Breast epithelium (tissue), 4 donors: ENCODE measurements at regions of chr11 and their contacts with region 1.

Region 1: DNA sequence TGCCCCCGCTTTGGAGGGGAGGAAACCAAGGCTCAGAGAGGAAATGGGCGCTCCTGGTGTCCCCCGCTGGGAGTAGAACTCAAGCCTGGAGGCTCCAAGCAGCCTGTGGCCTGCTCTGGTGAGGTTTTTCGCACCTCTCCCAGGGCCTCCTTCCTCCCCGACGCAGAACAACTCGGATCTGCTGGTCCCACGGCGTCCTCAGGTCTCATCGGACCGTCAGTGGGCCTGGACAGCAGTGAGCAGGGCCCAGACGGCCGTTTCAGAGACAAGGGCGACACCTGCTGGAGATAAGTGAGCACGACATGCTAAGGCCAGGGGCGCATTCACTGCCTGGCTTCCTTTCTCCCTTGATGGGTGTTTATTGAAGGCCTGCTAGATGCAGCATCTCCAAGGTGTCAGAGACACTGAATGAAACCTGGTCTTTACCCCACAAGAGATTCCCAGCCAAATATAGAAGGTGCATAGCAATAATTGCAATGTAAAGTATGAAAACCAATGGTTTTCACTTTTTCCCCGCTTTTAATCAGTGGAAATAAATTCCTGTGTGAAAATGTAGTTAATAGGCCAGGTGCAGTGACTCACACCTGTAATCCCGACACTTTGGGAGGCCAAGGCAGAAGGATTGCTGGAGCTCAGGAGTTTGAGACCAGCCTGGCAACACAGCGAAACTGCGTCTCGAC is 26.9 kb upstream of the CD82 start:
- DNase-seq: peak; percentile 57 to 73
- H3K4me3 ChIP-seq: peak overlapping the region in 1 of 3 donors; percentile 29
- H3K27ac ChIP-seq: peak overlapping the region in 1 of 2 donors; percentile 7
- H3K4me1 ChIP-seq: no peaks in the 10 kb centered on the region
- H3K27me3 ChIP-seq: no peaks in the 10 kb centered on the region
- CTCF ChIP-seq: peak; percentile 93 to 97 (median 96)
- POLR2A ChIP-seq: no peak

Region 2: DNA sequence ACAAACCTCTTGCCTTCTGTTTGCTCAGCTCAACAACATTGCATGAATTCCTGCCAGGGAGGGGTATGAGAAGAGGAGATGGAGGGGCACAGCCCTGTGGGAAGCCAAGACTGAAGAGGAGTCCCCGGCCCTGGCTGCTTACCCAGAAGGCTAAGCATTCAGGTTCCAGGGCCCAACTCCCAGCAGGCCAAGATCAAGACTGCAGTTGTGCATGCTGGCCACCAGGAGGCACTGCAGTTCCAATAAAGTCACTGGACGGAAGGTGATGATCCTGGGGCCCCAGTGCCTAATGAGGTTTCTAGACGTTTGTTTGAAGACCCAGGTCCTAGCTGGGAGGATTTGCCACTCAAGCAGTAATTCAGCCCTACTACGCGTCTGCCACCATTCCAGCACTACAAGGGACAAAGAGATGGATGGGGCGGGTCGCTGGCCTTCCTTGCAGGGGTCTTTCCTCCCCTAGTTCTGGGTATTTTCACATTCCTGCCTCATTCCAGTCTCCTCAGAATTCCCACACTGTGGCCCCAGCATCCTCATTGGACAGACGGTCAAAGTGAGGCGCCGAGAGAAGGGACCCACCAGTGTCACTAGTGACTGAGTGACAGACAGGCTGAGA is 252.1 kb before region 1 on chr11:
- intact Hi-C with region 1: loop called (anchors 10 kb)
- DNase-seq: no peak
- H3K4me3 ChIP-seq: no peak overlapping the region
- H3K27ac ChIP-seq: peak overlapping the region in 1 of 2 donors; percentile 9
- H3K4me1 ChIP-seq: no peaks in the 10 kb centered on the region
- H3K27me3 ChIP-seq: no peaks in the 10 kb centered on the region
- CTCF ChIP-seq: peak; percentile 83 to 90 (median 87)
- POLR2A ChIP-seq: no peak

Region 3: DNA sequence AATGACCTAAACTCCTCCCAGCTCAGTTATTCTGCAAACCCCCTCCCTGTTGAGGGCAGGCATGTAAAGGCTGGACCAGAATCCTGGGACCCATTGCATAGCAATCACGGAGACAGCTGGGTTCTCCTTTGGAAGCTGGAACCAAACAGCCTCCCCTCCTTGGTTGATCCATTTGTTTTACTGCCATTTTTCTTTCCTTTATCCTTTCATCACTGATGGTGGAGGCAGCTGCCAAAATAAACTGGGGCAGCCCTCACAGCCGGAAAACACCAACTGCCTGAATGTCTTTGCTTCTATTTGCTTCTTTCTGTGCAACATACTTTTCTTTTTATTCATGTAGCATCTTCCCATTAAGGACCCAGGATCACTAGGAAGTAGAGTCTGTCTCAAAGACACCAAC is 897.6 kb after region 1 on chr11:
- intact Hi-C with region 1: no loop called
- DNase-seq: no peak
- H3K4me3 ChIP-seq: no peak overlapping the region
- H3K27ac ChIP-seq: no peak overlapping the region
- H3K4me1 ChIP-seq: no peaks in the 10 kb centered on the region
- H3K27me3 ChIP-seq: peaks cover 0 to 15% of the 10 kb centered on the region in 2 donors
- CTCF ChIP-seq: no peak
- POLR2A ChIP-seq: no peak